WTC11 (cell line): ENCODE measurements at regions of chr7 and their contacts with region 1.

Region 1: GRCh38 chr7:786472-787255 is 45.6 kb upstream of the SUN1 start:
- DNase-seq: peak; percentile 87
- ATAC-seq: peak; percentile 92
- H3K4me3 Mint-ChIP-seq: no peak overlapping the region
- H3K27ac Mint-ChIP-seq: no peak overlapping the region
- H3K4me1 Mint-ChIP-seq: no peaks in the 10 kb centered on the region
- H3K27me3 Mint-ChIP-seq: no peaks in the 10 kb centered on the region; the same call in 1 of the 2 replicates
- CTCF ChIP-seq: peak; percentile 86

Region 2: GRCh38 chr7:816300-816750 is 29.7 kb after region 1 on chr7:
- CTCF ChIA-PET with region 1: interaction called, 12 read pairs
- POLR2A ChIA-PET with region 1: interaction called, 5 read pairs
- DNase-seq: peak; percentile 98
- ATAC-seq: peak; percentile 89
- H3K4me3 Mint-ChIP-seq: peak overlapping the region; percentile 87
- H3K27ac Mint-ChIP-seq: no peak overlapping the region
- H3K4me1 Mint-ChIP-seq: peaks cover 54% of the 10 kb centered on the region
- H3K27me3 Mint-ChIP-seq: no peaks in the 10 kb centered on the region
- CTCF ChIP-seq: no peak